Ovary (tissue), 10 donors: ENCODE measurements at regions of chr12 and their contacts with region 1.

Region 1: GRCh38 chr12:47079981-47080791 is 427 bp upstream of the AMIGO2 start:
- DNase-seq: peak; percentile 73 to 83 (median 81)
- H3K4me3 ChIP-seq: peak overlapping the region; percentile 78
- H3K27ac ChIP-seq: peak overlapping the region; percentile 89 to 98
- H3K4me1 ChIP-seq: peaks cover 10% of the 10 kb centered on the region
- H3K27me3 ChIP-seq: no peaks in the 10 kb centered on the region
- CTCF ChIP-seq: no peak
- EP300 ChIP-seq: no peak
- POLR2A ChIP-seq: peak; percentile 12

Region 2: GRCh38 chr12:47207340-47207717 is 127.1 kb after region 1 on chr12:
- intact Hi-C with region 1: no loop called
- DNase-seq: no peak
- H3K4me3 ChIP-seq: no peak overlapping the region
- H3K27ac ChIP-seq: no peak overlapping the region
- H3K4me1 ChIP-seq: no peaks in the 10 kb centered on the region
- H3K27me3 ChIP-seq: no peaks in the 10 kb centered on the region
- CTCF ChIP-seq: no peak
- EP300 ChIP-seq: no peak
- POLR2A ChIP-seq: no peak

Region 3: GRCh38 chr12:47223848-47224213 is 143.6 kb after region 1 on chr12:
- intact Hi-C with region 1: loop called in 2 of 4 experiments (anchors 10 kb)
- DNase-seq: peak; percentile 56 to 73 (median 64)
- H3K4me3 ChIP-seq: no peak overlapping the region
- H3K27ac ChIP-seq: peak overlapping the region; percentile 69 to 89
- H3K4me1 ChIP-seq: peaks cover 11% of the 10 kb centered on the region
- H3K27me3 ChIP-seq: no peaks in the 10 kb centered on the region
- CTCF ChIP-seq: no peak
- EP300 ChIP-seq: no peak
- POLR2A ChIP-seq: no peak

Region 4: GRCh38 chr12:47812797-47813510 is 732.8 kb after region 1 on chr12:
- intact Hi-C with region 1: loop called in 1 of 4 experiments (anchors 10 kb)
- DNase-seq: peak; percentile 91 to 93 (median 92)
- H3K4me3 ChIP-seq: peak overlapping the region; percentile 36
- H3K27ac ChIP-seq: peak overlapping the region; percentile 97 to 98
- H3K4me1 ChIP-seq: peaks cover 48% of the 10 kb centered on the region
- H3K27me3 ChIP-seq: no peaks in the 10 kb centered on the region
- CTCF ChIP-seq: no peak
- EP300 ChIP-seq: no peak
- POLR2A ChIP-seq: peak; percentile 52